Sciatic nerve (tissue), 2 donors: ENCODE measurements at regions of chr15 and their contacts with region 1.

Region 1: GRCh38 chr15:78179906-78180305 is 30.7 kb downstream of the IDH3A start:
- DNase-seq: no peak
- ATAC-seq: no peak

Region 2: GRCh38 chr15:77040673-77041072 is 1139.2 kb before region 1 on chr15:
- intact Hi-C with region 1: no loop called
- DNase-seq: no peak
- ATAC-seq: peak; percentile 39

Region 3: DNA sequence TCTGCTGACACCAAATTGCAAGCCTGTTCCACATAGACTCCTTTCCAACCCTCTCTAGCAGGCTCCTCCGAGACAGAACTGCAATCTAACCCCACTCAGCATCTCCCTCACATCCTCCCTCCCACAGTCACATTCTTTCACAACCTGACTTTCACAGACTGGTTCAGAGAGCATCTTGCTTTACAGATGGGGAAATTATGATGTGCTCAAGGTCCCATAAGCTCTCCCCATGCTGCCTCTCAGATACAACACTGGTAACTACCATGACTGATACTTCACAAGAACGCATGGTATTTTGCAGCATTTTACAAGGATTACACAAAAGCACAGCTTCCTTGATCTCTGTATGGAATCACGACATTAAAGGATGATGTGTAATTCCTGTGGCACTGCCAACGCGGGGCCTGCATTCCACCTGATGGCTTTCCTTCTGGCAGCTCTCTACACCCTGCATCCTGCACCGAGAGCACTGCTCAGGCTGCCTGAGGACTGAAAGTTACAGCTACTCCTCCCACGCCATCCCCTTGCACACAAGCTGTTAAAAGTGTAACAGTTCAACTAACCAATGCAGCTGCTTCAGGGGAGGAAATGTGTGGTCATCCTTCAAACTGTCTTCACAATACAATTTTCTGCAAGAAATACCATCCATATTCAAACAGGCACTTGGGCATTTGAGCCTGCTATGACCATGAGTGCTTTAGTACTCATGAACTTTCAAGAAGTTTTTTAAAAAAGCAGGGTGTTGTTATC is 130.0 kb before region 1 on chr15:
- intact Hi-C with region 1: no loop called
- DNase-seq: no peak
- ATAC-seq: no peak

Region 4: GRCh38 chr15:78239811-78240210 is 59.9 kb after region 1 on chr15:
- intact Hi-C with region 1: loop called (anchors 2 kb)
- DNase-seq: peak; percentile 4
- ATAC-seq: no peak